Adrenal gland (tissue), 19 donors: ENCODE measurements at regions of chr11 and their contacts with region 1.

Region 1: DNA sequence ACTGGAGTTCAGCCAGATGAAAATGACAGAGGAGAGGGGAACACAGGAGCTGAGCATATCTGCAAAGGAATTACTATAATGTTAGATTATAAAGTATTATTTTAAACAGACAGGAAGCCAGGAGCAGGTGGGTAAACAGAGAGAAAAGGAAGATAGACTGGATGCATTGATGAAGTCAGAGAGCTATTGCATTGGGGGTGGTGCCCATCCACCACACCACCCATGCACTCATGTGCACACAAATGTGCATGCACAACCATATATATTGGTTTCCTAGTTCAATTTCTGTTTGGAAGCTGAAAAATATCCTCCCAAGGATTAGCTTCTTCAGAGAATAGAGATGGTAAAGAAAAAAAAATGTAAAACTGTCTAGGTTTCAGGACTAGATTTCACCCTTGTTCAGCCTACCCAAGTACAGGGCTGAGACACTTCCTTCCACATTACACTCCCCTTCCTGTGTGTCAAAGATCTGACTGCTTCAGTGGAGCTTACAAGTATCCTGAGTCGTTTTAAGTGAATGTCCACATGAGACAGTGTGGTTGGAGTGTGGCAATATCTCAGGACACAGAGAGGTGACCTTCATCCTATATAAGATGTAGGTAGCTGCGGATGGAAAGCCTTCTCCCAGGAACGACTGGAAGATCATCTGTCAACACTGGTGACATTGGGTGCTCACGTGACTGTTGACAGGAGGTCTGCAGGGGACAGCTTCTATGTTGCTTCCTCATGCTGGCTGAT is 12.2 kb upstream of the SMPD1 start:
- DNase-seq: no peak
- H3K4me3 ChIP-seq: no peak overlapping the region
- H3K27ac ChIP-seq: no peak overlapping the region
- H3K4me1 ChIP-seq: no peaks in the 10 kb centered on the region
- H3K27me3 ChIP-seq: no peaks in the 10 kb centered on the region
- CTCF ChIP-seq: no peak
- POLR2A ChIP-seq: no peak

Region 2: GRCh38 chr11:6040874-6041273 is 337.2 kb before region 1 on chr11:
- intact Hi-C with region 1: no loop called
- DNase-seq: no peak
- H3K4me3 ChIP-seq: no peak overlapping the region
- H3K27ac ChIP-seq: no peak overlapping the region
- H3K4me1 ChIP-seq: no peaks in the 10 kb centered on the region
- H3K27me3 ChIP-seq: no peaks in the 10 kb centered on the region
- CTCF ChIP-seq: no peak
- POLR2A ChIP-seq: no peak

Region 3: DNA sequence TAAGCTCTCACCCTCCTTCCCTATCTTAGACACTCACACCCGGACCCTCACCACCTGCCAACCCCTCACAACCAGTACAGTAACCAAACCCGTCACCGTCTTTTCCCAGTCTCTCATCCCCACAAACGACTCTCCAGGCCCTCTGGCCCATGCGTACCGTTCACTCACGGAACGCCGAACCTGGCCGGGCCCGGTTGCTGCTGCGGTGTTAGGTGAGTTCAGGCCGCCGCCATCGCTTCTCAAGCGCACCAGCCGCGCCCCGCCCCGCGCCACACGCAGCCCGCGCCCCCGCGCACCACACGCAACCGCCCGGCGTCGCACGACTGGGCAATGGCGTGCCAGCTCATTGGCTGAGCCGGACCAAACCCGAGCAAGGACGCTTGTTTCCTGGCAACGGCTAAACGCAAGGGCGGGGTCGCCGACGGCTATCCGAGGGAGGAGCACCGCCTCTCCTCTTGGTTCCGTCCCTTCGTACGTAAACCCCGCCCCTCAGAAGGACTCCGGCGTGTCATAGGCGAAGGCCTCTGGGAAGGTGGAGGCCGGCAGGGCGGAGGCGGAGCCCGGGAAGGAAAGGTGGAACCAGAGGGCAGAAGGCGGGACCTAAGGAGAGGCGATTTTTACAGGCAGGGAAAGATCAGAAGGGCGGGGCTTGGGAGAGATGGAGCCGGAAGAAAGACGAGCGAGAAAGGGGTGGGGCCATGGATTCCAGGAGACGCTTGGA is 143.5 kb before region 1 on chr11 and contains the start of gene FHIP1B:
- intact Hi-C with region 1: no loop called
- DNase-seq: peak; percentile 100
- H3K4me3 ChIP-seq: peak within 1 kb of the TSS; percentile 27 to 84 (median 79)
- H3K27ac ChIP-seq: peak within 1 kb of the TSS; percentile 35 to 93 (median 80)
- H3K4me1 ChIP-seq: peaks cover 0 to 24% of the 10 kb centered on the region in 2 donors
- H3K27me3 ChIP-seq: no peaks in the 10 kb centered on the region
- CTCF ChIP-seq: no peak
- POLR2A ChIP-seq: peak in 1 of 2 donors; percentile 40
- total RNA-seq, gene FHIP1B: 15.6 to 51.5 (median 34.3) TPM

Region 4: GRCh38 chr11:6443269-6444003 is 65.4 kb after region 1 on chr11:
- intact Hi-C with region 1: loop called (anchors 2 to 5 kb)
- DNase-seq: peak; percentile 46 to 75 (median 66)
- H3K4me3 ChIP-seq: no peak overlapping the region
- H3K27ac ChIP-seq: no peak overlapping the region
- H3K4me1 ChIP-seq: no peaks in the 10 kb centered on the region
- H3K27me3 ChIP-seq: no peaks in the 10 kb centered on the region
- CTCF ChIP-seq: peak; percentile 71 to 88 (median 84)
- POLR2A ChIP-seq: no peak

Region 5: GRCh38 chr11:6448574-6448973 is 70.5 kb after region 1 on chr11:
- intact Hi-C with region 1: loop called (anchors 2 to 5 kb)
- DNase-seq: no peak
- H3K4me3 ChIP-seq: no peak overlapping the region
- H3K27ac ChIP-seq: no peak overlapping the region
- H3K4me1 ChIP-seq: no peaks in the 10 kb centered on the region
- H3K27me3 ChIP-seq: no peaks in the 10 kb centered on the region
- CTCF ChIP-seq: no peak
- POLR2A ChIP-seq: no peak

Region 6: GRCh38 chr11:6505577-6506240 is 127.6 kb after region 1 on chr11:
- intact Hi-C with region 1: loop called in 1 of 2 experiments (anchors 10 kb)
- DNase-seq: peak in 1 of 7 donors; percentile 32
- H3K4me3 ChIP-seq: no peak overlapping the region
- H3K27ac ChIP-seq: no peak overlapping the region
- H3K4me1 ChIP-seq: no peaks in the 10 kb centered on the region
- H3K27me3 ChIP-seq: no peaks in the 10 kb centered on the region
- CTCF ChIP-seq: peak; percentile 48 to 71 (median 64)
- POLR2A ChIP-seq: no peak

Region 7: DNA sequence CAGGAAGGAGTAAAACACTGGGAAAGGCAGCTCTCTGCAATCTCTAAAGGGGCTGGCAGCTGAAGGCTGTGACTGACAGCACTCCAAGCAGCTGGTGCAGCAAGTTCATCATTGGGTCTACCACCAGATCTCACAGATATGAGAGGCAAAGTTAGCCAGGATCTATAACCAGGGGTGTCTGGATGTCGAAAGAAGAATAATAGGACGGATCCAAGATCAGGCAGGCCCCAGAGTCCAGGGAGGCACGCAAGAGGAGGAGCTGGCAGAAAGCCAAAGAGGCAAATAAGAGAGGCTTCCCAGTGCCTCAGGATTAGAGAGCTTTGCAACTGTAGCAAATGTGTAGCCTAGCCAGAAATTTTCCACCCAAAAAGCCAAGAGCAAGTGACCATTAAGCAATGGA is 787.8 kb after region 1 on chr11:
- intact Hi-C with region 1: no loop called
- DNase-seq: no peak
- H3K4me3 ChIP-seq: no peak overlapping the region
- H3K27ac ChIP-seq: no peak overlapping the region
- H3K4me1 ChIP-seq: no peaks in the 10 kb centered on the region
- H3K27me3 ChIP-seq: no peaks in the 10 kb centered on the region
- CTCF ChIP-seq: no peak
- POLR2A ChIP-seq: no peak